Left lung (tissue), 14 donors: ENCODE measurements at regions of chr10 and their contacts with region 1.

Region 1: GRCh38 chr10:75099952-75100763 is 11.3 kb upstream of the SAMD8 start:
- DNase-seq: peak; percentile 61 to 96 (median 82)
- ATAC-seq: peak; percentile 98
- H3K4me3 ChIP-seq: no peak overlapping the region
- H3K27ac ChIP-seq: no peak overlapping the region
- H3K4me1 ChIP-seq: peaks cover 0 to 14% of the 10 kb centered on the region in 2 donors
- H3K27me3 ChIP-seq: no peaks in the 10 kb centered on the region
- CTCF ChIP-seq: peak; percentile 99

Region 2: GRCh38 chr10:74262856-74263255 is 837.3 kb before region 1 on chr10:
- intact Hi-C with region 1: loop called in 1 of 2 experiments (anchors 5 kb)
- DNase-seq: no peak
- ATAC-seq: no peak
- H3K4me3 ChIP-seq: no peak overlapping the region
- H3K27ac ChIP-seq: no peak overlapping the region
- H3K4me1 ChIP-seq: no peaks in the 10 kb centered on the region
- H3K27me3 ChIP-seq: no peaks in the 10 kb centered on the region
- CTCF ChIP-seq: no peak

Region 3: GRCh38 chr10:75235375-75236177 is 135.4 kb after region 1 on chr10 and contains the start of gene COMTD1:
- intact Hi-C with region 1: loop called in 1 of 2 experiments (anchors 10 kb)
- DNase-seq: peak; percentile 84 to 100 (median 94)
- ATAC-seq: peak; percentile 89
- H3K4me3 ChIP-seq: peak within 1 kb of the TSS; percentile 88 to 95
- H3K27ac ChIP-seq: peak within 1 kb of the TSS; percentile 75 to 86
- H3K4me1 ChIP-seq: peaks cover 5 to 20% of the 10 kb centered on the region in 2 donors
- H3K27me3 ChIP-seq: no peaks in the 10 kb centered on the region
- CTCF ChIP-seq: peak; percentile 100
- polyA plus RNA-seq, gene COMTD1: 3.4 to 4.7 (median 4.3) TPM